ENCODE measurements at regions of chr11 and their contacts with region 1.

Region 1: GRCh38 chr11:109853156-109853776 is 239.9 kb upstream of the ZC3H12C start:
- DNase-seq: peak; percentile 79
- ATAC-seq: peak; percentile 71
- H3K4me3 ChIP-seq: no peak overlapping the region
- H3K27ac ChIP-seq: no peak overlapping the region
- H3K4me1 ChIP-seq: peaks cover 16 to 38% of the 10 kb centered on the region in 2 experiments
- H3K27me3 ChIP-seq: no peaks in the 10 kb centered on the region
- CTCF ChIP-seq: peak; percentile 67 to 79 (median 68)
- POLR2A ChIP-seq: no peak
- RAD21 ChIP-seq: peak; percentile 93

Region 2: GRCh38 chr11:108697872-108698473 is 1155.3 kb before region 1 on chr11:
- CTCF ChIA-PET with region 1: interaction called, 11 read pairs
- POLR2A ChIA-PET with region 1: no interaction called
- RAD21 ChIA-PET with region 1: no interaction called
- intact Hi-C with region 1: loop called (anchors 5 kb)
- DNase-seq: peak; percentile 51
- ATAC-seq: peak; percentile 86
- H3K4me3 ChIP-seq: no peak overlapping the region
- H3K27ac ChIP-seq: no peak overlapping the region
- H3K4me1 ChIP-seq: peaks cover 5 to 13% of the 10 kb centered on the region in 2 experiments
- H3K27me3 ChIP-seq: no peaks in the 10 kb centered on the region
- CTCF ChIP-seq: peak; percentile 74 to 89 (median 88)
- POLR2A ChIP-seq: no peak
- RAD21 ChIP-seq: peak; percentile 97

Region 3: DNA sequence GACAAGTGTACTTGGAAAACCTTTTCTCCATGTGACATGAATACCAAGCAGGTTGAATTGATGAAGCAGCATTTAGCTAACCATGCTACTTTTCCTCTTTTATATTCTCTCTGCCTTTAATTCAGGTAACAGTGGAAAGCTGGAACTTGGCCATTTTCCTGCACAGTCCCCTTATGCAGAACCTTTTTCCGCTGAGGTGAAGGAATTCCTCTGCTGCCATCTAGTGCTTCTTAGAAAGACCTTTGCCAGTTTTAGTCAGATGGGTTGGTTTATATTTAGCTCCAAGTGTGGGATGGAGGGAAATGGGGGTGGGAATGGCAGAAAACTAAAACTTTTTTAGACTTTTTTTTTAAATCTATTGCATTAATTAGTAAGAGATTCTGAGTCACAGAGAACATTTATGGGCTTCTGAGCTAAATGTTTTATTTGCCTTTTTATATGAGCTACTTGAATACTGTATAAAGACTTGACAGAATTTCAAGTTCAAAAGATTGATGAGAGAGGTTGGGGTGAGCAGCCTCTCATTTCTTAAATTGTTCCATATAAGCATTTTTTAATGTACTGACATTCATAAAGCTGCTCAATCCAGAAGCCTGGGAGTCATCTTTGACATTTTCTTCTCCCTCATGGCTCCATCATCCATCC is 86.0 kb after region 1 on chr11:
- CTCF ChIA-PET with region 1: interaction called, 73 read pairs
- POLR2A ChIA-PET with region 1: interaction called, 3 read pairs
- RAD21 ChIA-PET with region 1: interaction called, 8 to 9 read pairs
- intact Hi-C with region 1: loop called (anchors 1 kb)
- DNase-seq: peak; percentile 85
- ATAC-seq: peak; percentile 96
- H3K4me3 ChIP-seq: no peak overlapping the region
- H3K27ac ChIP-seq: no peak overlapping the region
- H3K4me1 ChIP-seq: peaks cover 0 to 21% of the 10 kb centered on the region in 2 experiments; a peak in 3 of 4 replicates
- H3K27me3 ChIP-seq: no peaks in the 10 kb centered on the region
- CTCF ChIP-seq: peak; percentile 71 to 82 (median 80)
- POLR2A ChIP-seq: no peak
- RAD21 ChIP-seq: peak; percentile 99

Region 4: DNA sequence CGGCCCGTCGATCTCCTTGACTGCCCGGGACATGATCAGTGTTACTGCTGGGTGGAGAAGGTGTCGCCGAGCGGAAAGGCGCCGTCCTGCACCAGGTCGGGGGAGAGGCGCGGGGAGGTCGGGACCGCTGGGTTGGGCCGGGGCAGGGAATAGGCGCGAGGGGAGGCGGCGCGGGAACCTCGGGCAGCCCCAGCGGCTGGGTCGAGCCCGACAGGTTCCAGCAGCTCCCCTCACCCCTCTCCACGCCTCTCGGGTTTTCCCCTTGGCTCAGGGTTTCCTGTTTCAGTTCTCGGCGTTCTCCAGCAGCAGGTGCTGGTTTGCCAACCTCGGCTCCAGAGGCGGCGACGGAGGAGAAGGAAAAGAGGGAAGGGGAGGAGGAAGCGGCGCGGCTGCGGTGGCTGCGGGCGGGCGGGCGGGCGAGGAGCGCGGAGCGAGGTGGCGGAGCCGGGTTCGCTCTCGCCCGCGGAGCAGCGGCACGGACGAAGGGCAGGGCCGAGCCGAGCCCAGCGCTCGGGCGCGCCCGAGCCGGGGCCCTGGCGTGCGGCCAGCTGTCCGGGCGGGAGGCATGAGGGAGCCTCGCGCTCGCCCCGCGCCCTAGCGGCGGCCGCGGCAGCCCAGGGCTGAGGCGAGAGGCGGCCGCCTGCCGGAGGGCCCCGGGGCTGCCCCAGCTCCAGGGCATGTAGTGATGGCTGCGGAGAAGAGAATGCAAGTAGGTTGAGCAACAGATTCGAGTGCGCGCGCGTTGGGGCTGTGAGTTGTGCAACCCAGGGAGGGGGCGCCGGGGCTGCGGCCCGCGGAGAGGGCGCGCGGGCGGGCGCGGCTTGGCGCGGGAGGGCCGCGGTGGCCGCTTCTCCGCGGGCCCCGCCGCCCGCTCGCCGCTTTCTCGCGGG is 239.5 kb after region 1 on chr11 and contains the start of gene ZC3H12C:
- CTCF ChIA-PET with region 1: no interaction called
- POLR2A ChIA-PET with region 1: no interaction called
- RAD21 ChIA-PET with region 1: no interaction called
- intact Hi-C with region 1: loop called (anchors 5 kb)
- DNase-seq: peak; percentile 77
- ATAC-seq: peak; percentile 79
- H3K4me3 ChIP-seq: peak within 1 kb of the TSS; percentile 69 to 74
- H3K27ac ChIP-seq: peak within 1 kb of the TSS; percentile 89
- H3K4me1 ChIP-seq: peaks cover 22 to 36% of the 10 kb centered on the region in 2 experiments
- H3K27me3 ChIP-seq: no peaks in the 10 kb centered on the region
- CTCF ChIP-seq: peak in 1 of 3 experiments; percentile 41; a peak in 1 of 6 replicates
- POLR2A ChIP-seq: no peak
- RAD21 ChIP-seq: peak; percentile 22; the same call in 1 of the 2 replicates
- total RNA-seq, gene ZC3H12C: 10.2 TPM

Region 5: DNA sequence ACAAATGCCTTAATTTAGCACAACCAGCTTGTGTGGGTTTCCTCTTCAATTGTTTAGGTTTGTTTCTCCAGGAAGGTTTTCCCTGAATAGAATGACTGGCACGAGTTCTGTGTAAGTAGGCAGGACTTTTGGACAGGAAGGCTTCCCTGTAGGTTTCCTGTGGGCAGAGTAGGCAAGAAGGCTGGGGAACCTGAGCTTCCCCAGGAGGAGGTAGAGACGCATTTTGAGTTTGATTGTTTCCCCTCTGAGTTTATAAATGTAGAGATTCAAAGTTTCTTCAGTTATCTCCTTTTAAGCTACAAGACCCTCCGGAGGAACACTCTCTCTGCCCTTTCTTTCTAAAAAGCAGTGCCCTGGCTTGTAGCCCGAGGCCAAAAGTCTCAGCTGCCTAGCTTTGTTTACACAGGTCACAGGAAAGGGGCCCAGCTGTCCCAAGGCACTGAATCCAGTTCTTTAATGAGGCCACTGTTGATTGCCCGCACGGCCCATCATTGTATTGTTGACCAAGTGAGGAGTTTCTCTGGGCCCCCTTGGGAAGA is 509.8 kb after region 1 on chr11:
- CTCF ChIA-PET with region 1: no interaction called
- POLR2A ChIA-PET with region 1: no interaction called
- RAD21 ChIA-PET with region 1: no interaction called
- intact Hi-C with region 1: loop called (anchors 5 kb)
- DNase-seq: peak; percentile 34
- ATAC-seq: peak; percentile 82
- H3K4me3 ChIP-seq: peak overlapping the region; percentile 18 to 35
- H3K27ac ChIP-seq: peak overlapping the region; percentile 63
- H3K4me1 ChIP-seq: peaks cover 38 to 39% of the 10 kb centered on the region in 2 experiments
- H3K27me3 ChIP-seq: no peaks in the 10 kb centered on the region
- CTCF ChIP-seq: no peak
- POLR2A ChIP-seq: no peak
- RAD21 ChIP-seq: peak; percentile 12; the same call in 1 of the 2 replicates

Region 6: DNA sequence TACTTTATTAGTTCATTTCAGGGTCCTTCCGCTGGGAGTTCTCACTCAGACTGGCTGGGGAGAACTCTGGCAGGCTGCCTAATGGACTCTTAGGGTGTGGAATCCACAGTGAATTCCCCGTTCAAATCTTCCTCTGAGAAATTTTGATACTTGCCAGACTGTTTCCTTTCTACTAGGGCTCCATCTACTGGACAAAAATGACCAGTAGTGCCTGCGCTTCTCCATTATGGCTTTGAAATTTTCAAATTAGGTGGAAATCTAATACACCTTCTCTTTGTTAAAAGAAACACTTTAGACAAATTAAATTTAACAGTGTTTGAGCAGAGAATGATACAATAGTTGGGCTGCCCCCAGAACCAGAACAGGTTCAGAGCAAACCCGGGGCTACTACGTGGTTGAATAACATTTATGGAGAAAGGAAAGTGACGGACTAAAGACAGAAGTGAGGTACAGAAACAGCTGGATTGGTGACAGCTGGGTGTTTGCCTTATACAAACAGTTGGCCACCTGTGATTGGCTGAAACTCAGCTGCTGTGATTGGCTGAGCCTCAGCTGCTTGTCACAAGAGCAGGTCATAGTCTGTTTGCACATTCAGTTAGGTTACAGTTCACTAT is 523.6 kb after region 1 on chr11:
- CTCF ChIA-PET with region 1: interaction called, 6 read pairs
- POLR2A ChIA-PET with region 1: no interaction called
- RAD21 ChIA-PET with region 1: no interaction called
- intact Hi-C with region 1: loop called (anchors 2 kb)
- DNase-seq: peak; percentile 85
- ATAC-seq: peak; percentile 94
- H3K4me3 ChIP-seq: peak overlapping the region; percentile 27 to 33; a peak in 3 of 4 replicates
- H3K27ac ChIP-seq: peak overlapping the region; percentile 21; the same call in 1 of the 2 replicates
- H3K4me1 ChIP-seq: peaks cover 8% of the 10 kb centered on the region in 2 experiments; a peak in 3 of 4 replicates
- H3K27me3 ChIP-seq: no peaks in the 10 kb centered on the region
- CTCF ChIP-seq: peak; percentile 79 to 93 (median 92)
- POLR2A ChIP-seq: no peak
- RAD21 ChIP-seq: peak; percentile 94

Region 7: DNA sequence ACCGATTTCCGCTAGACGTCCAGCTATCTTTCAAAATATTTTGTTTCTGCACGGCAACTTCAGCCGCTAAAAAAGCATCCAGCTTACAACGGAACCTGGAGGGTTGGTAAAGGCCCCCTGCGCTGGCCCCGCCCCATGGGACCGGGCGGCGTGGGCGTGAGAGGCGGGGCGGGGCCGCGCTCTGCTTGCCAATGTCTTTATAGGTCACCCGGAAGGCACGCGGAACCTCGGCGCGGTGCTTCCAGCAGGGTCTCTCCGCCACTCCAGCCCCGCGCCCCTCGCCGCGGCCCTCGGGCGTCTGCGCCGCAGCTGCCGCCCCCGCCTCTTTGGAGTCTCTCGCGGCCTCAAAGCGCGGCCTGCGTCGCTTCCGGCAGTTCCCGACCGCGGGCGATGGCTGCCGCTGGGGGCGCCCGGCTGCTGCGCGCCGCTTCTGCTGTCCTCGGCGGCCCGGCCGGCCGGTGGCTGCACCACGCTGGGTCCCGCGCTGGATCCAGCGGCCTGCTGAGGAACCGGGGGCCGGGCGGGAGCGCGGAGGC is 576.5 kb after region 1 on chr11 and contains the start of gene FDX1:
- CTCF ChIA-PET with region 1: interaction called, 3 read pairs
- POLR2A ChIA-PET with region 1: no interaction called
- RAD21 ChIA-PET with region 1: no interaction called
- intact Hi-C with region 1: loop called (anchors 2 kb)
- DNase-seq: peak; percentile 51
- ATAC-seq: peak; percentile 85
- H3K4me3 ChIP-seq: peak within 1 kb of the TSS; percentile 72 to 89
- H3K27ac ChIP-seq: peak within 1 kb of the TSS; percentile 84
- H3K4me1 ChIP-seq: peaks cover 35 to 50% of the 10 kb centered on the region in 2 experiments
- H3K27me3 ChIP-seq: no peaks in the 10 kb centered on the region
- CTCF ChIP-seq: peak; percentile 4 to 40 (median 32); a peak in 4 of 6 replicates
- POLR2A ChIP-seq: peak; percentile 55
- RAD21 ChIP-seq: no peak
- total RNA-seq, gene FDX1: 14.5 TPM